AG04450 (cell line): ENCODE measurements at regions of chr2 and their contacts with region 1.

Region 1: DNA sequence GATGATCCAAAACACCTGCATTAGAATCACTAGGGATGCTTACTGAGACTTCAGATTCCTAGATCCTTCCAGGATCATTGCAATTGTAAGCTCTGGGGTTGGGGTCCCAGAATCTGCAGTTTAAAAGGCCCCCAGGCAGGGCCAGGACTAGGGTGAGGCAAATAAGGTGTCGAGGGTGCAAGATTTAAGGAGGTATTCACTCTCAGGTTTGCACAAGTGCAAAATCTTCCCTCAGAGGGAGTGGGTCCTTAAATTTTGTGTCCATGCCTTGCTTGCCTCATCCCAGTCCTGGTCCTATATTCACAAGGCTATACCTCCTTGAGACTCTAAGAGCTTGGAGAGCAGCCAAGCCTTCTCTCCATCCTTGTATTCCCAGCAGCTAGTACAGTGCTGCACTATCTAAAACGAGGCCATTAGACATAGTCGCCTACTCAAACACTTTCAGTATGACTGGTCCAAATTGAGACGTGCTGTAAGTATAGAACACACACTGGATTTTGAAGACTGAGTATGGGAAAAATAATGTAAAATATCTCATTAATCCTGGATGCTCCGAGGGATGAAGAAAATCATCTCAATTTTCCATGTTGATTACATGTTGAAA is 31.6 kb upstream of the MREG start:
- DNase-seq: no peak
- H3K4me3 ChIP-seq: no peak overlapping the region
- H3K27ac ChIP-seq: no peak overlapping the region
- H3K27me3 ChIP-seq: no peaks in the 10 kb centered on the region
- CTCF ChIP-seq: no peak

Region 2: GRCh38 chr2:214774108-214774507 is 1270.9 kb before region 1 on chr2:
- CTCF ChIA-PET with region 1: no interaction called
- POLR2A ChIA-PET with region 1: no interaction called
- DNase-seq: peak; percentile 29
- H3K4me3 ChIP-seq: no peak overlapping the region
- H3K27ac ChIP-seq: no peak overlapping the region
- H3K27me3 ChIP-seq: no peaks in the 10 kb centered on the region
- CTCF ChIP-seq: no peak

Region 3: GRCh38 chr2:216034065-216034464 is 10.9 kb before region 1 on chr2:
- CTCF ChIA-PET with region 1: interaction called, 27 read pairs
- POLR2A ChIA-PET with region 1: no interaction called
- DNase-seq: peak; percentile 42
- H3K4me3 ChIP-seq: no peak overlapping the region
- H3K27ac ChIP-seq: no peak overlapping the region
- H3K27me3 ChIP-seq: no peaks in the 10 kb centered on the region
- CTCF ChIP-seq: peak; percentile 88

Region 4: GRCh38 chr2:216078776-216079175 is 33.8 kb after region 1 on chr2:
- CTCF ChIA-PET with region 1: interaction called, 11 read pairs
- POLR2A ChIA-PET with region 1: no interaction called
- DNase-seq: no peak
- H3K4me3 ChIP-seq: no peak overlapping the region
- H3K27ac ChIP-seq: no peak overlapping the region
- H3K27me3 ChIP-seq: no peaks in the 10 kb centered on the region
- CTCF ChIP-seq: no peak

Region 5: DNA sequence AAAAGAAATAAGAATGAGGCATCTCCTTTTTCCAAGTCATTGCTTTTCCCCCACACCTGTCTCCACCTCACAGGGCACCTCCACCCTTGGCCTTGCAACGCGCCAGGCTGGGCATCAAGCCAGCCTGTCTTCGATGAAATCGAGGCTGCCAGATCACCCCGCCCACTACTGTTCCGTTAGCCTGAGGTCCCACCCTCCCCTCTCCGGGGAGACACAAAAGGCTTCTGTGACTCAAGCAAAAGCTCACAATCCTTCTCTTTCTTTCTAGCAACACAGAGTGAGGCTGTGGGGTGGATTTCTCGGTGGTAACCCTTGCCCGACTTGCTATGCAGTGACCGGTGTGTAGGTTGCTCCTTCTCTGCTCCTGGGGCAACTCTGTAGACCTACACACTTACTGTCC is 805.0 kb after region 1 on chr2:
- CTCF ChIA-PET with region 1: no interaction called
- POLR2A ChIA-PET with region 1: no interaction called
- DNase-seq: no peak
- H3K4me3 ChIP-seq: no peak overlapping the region
- H3K27ac ChIP-seq: no peak overlapping the region
- H3K27me3 ChIP-seq: no peaks in the 10 kb centered on the region
- CTCF ChIP-seq: no peak